Left ventricle myocardium superior (tissue), 1 donor: ENCODE measurements at regions of chr15 and their contacts with region 1.

Region 1: GRCh38 chr15:99275525-99276128 is 24.3 kb downstream of the LRRC28 start:
- DNase-seq: no peak
- ATAC-seq: no peak

Region 2: GRCh38 chr15:99305761-99306505 is 30.3 kb after region 1 on chr15:
- intact Hi-C with region 1: no loop called
- DNase-seq: peak; percentile 73
- ATAC-seq: peak; percentile 66

Region 3: GRCh38 chr15:99755692-99756409 is 480.2 kb after region 1 on chr15:
- intact Hi-C with region 1: loop called (anchors 10 kb)
- DNase-seq: peak; percentile 39
- ATAC-seq: peak; percentile 90